ENCODE measurements at regions of chrX and their contacts with region 1.

Region 1: DNA sequence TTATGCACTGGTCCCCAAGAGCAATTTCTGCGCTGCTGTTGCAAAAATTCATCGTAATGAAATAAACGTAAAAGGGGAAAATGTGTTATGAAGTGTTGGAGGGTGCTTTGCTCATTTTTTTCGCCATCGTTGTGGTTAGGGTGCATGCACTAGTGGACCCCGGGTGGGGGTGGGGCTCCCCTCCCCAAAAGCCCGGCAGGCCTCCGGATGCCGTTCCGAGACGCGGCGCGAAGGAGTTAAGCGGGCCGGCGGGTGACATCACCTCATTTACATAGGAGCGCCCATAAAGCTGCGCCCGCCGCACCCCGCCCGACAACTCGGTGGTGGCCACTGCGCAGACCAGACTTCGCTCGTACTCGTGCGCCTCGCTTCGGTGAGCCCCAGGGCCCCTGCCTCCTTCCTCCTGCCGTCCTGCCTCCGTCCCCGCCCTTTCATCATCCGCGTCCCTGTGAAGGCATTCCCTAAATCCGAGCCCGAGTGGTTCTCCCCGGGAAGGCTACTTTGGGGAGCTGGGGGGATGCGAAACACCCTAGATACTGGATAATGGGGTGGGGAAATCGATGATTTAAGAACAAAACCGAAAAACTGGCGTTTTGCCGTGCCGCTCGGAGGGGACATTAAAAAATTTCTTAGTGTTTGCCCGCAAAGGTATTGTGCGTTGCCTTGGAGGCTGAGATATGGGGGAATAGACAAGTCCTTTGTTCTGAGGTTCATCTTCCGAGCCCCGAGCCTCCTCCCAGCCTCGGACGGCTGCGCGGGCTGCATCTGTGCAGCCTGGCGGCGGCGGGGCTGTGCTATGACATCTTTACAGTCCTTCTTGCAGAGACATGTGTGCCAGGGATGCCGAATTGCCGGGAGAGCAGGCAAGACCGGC is at the start of gene TMSB4X:
- DNase-seq: peak; percentile 81 to 95 (median 90)

Region 2: GRCh38 chrX:13092455-13092941 is 117.5 kb after region 1 on chrX:
- intact Hi-C with region 1: loop called (anchors 10 kb)
- DNase-seq: peak in 15 of 42 donors; percentile 4 to 49 (median 18)

Region 3: GRCh38 chrX:13487731-13488523 is 512.9 kb after region 1 on chrX:
- intact Hi-C with region 1: loop called (anchors 10 kb)
- DNase-seq: peak in 31 of 42 donors; percentile 11 to 77 (median 42)